ENCODE measurements at regions of chr4 and their contacts with region 1.

Region 1: GRCh38 chr4:184733654-184734524 is at the start of gene CENPU:
- DNase-seq: peak; percentile 95 to 99
- H3K4me3 ChIP-seq: peak within 1 kb of the TSS; percentile 73
- CTCF ChIP-seq: no peak
- POLR2A ChIP-seq: no peak
- total RNA-seq, gene CENPU: 9.2 to 14.8 (median 12.3) TPM

Region 2: GRCh38 chr4:182917182-182918043 is 1816.5 kb before region 1 on chr4 and contains the start of gene DCTD:
- intact Hi-C with region 1: no loop called
- DNase-seq: peak; percentile 65 to 95
- H3K4me3 ChIP-seq: peak within 1 kb of the TSS; percentile 47
- CTCF ChIP-seq: no peak
- POLR2A ChIP-seq: no peak
- total RNA-seq, gene DCTD: 27.7 to 52.4 (median 35.4) TPM

Region 3: DNA sequence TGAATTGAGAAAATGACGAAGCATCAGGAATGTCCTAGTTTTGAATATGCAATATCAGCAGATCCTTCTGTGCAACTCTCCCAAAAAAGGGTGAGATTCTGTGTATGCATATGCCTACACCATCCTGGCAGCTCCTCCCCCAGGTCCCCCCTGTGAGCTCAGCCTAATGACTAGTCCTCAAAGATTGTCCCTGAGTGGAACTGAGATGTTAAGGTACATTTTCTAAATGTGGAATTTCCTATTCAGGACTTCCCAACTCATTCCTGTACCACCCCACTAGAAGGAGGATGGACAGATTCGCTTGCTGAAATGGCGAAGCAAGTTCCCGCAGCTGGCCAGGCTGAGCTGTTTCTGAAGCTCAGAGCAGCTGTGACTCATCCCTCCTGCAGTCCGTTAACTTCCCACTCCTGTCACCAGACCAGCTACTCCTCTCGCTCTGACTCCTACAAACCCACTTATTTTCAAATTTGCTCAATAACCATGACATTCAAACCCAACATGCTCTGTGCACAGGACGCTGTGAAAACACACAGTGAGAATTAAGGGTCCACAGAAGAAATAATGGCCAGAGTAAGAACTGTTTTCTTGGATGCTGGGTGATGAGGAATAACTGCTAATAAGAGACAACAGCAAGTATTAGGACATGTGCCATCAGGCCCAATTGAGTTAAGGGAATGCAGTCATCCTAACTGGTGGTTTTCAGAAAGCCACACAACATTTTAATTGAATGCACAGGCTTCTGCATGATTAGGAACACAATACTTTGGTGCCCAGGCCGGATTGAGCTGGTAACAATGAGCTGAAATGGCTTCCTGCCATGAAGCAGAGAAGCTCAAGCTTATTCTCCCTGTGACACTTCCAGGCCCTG is 219.5 kb before region 1 on chr4:
- intact Hi-C with region 1: no loop called
- DNase-seq: peak; percentile 55 to 91
- H3K4me3 ChIP-seq: no peak overlapping the region
- CTCF ChIP-seq: no peak
- POLR2A ChIP-seq: no peak

Region 4: DNA sequence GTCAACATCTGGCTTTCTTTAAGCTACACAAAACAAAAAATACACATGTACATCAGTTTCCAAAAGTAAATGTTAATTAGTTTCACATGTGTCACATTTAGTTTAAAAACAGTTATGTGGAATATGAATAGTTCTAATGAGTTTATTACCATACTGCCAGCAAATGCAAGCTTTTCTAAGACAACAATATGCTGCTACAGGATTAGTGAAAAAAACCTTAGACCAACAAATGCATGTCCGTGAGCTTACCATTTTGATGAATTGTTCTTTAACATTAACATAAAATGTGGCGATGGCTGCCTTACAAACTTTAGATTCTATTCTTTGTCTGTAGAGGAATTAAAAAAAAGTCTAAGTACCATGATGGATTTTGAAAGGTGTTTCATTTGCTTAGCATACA is 31.8 kb before region 1 on chr4:
- intact Hi-C with region 1: loop called (anchors 1 kb)
- DNase-seq: no peak
- H3K4me3 ChIP-seq: no peak overlapping the region
- CTCF ChIP-seq: no peak
- POLR2A ChIP-seq: no peak